SK-N-SH (cell line): ENCODE measurements at regions of chr2 and their contacts with region 1.

Region 1: DNA sequence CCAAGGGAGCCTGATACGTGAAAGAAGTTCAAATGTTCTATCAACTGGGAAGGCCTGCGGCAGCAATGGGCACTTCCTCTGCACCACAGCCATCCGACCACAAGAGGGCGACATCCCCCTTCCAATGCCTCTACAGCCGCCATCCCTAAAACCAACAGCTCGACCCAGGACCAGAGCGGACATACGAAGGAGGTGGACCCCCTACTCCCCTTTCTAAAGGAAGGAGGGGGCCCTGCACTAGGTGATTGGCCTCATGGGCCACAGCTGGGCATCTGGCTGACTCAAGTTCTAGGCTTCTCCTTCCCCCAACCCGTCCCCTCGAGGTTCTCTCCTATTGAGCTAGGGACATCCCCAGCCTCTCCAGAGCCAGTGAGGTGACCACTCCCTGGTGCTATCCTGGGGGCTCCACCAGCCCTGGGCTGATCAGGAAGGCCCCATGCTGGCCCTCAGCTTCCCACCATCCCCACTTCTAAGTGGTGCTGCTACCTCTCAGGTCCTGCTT is 217.2 kb downstream of the TNS1 start:
- DNase-seq: peak; percentile 90
- H3K4me3 ChIP-seq: no peak overlapping the region; a peak in 1 of 4 replicates
- H3K27ac ChIP-seq: no peak overlapping the region
- H3K4me1 ChIP-seq: peaks cover 0 to 9% of the 10 kb centered on the region in 2 experiments; a peak in 2 of 4 replicates
- H3K27me3 ChIP-seq: no peaks in the 10 kb centered on the region
- CTCF ChIP-seq: peak; percentile 94
- EP300 ChIP-seq: no peak
- RAD21 ChIP-seq: peak; percentile 98

Region 2: GRCh38 chr2:217593732-217594131 is 191.9 kb before region 1 on chr2:
- CTCF ChIA-PET with region 1: no interaction called
- POLR2A ChIA-PET with region 1: no interaction called
- DNase-seq: no peak
- H3K4me3 ChIP-seq: no peak overlapping the region
- H3K27ac ChIP-seq: no peak overlapping the region; a peak in 1 of 4 replicates
- H3K4me1 ChIP-seq: peaks cover 0 to 5% of the 10 kb centered on the region in 2 experiments; a peak in 1 of 4 replicates
- H3K27me3 ChIP-seq: no peaks in the 10 kb centered on the region; the same call in 1 of the 2 replicates
- CTCF ChIP-seq: no peak
- EP300 ChIP-seq: no peak
- RAD21 ChIP-seq: no peak

Region 3: DNA sequence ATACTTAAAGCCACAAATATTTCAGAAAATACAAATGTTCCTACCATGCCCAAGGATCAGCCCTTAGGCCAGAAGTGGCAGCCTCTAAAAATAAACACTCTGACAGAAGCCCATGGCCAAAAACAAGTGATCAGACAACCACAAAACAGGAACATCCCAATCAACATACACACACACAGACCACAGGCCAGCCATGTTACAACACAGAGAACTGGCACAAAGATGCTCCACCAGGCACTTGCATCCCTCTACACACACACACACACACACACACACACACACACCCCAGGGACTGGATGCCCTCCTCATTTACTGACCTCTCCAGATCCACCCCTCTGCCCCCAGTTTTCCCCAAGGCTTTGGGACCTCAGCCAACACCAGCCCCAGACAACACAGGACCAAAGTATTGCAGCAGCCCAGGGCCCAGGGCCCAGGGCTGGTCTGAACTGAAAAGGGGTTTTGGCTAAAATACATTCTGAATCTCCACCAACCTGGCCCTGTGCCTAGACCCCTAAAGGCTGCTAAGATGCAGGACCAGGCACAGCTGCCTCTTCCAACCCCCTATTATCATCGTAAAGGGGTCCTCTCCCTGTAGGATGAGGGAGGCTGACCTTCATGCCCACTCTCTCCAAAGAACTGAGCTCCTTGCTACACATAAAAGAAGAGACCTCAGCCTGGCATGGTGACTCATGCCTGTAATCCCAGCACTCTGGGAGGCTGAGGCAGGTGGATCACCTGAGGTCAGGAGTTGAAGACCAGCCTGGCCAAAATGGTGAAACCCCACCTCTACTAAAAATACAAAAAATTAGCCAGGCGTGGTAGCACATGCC is 65.8 kb after region 1 on chr2:
- CTCF ChIA-PET with region 1: interaction called, 12 read pairs
- POLR2A ChIA-PET with region 1: no interaction called
- DNase-seq: peak; percentile 69
- H3K4me3 ChIP-seq: no peak overlapping the region
- H3K27ac ChIP-seq: peak overlapping the region in 1 of 2 experiments; percentile 63; a peak in 2 of 4 replicates
- H3K4me1 ChIP-seq: peaks cover 31 to 46% of the 10 kb centered on the region in 2 experiments; a peak in 3 of 4 replicates
- H3K27me3 ChIP-seq: no peaks in the 10 kb centered on the region
- CTCF ChIP-seq: no peak
- EP300 ChIP-seq: no peak; a peak in 1 of 4 replicates
- RAD21 ChIP-seq: no peak

Region 4: DNA sequence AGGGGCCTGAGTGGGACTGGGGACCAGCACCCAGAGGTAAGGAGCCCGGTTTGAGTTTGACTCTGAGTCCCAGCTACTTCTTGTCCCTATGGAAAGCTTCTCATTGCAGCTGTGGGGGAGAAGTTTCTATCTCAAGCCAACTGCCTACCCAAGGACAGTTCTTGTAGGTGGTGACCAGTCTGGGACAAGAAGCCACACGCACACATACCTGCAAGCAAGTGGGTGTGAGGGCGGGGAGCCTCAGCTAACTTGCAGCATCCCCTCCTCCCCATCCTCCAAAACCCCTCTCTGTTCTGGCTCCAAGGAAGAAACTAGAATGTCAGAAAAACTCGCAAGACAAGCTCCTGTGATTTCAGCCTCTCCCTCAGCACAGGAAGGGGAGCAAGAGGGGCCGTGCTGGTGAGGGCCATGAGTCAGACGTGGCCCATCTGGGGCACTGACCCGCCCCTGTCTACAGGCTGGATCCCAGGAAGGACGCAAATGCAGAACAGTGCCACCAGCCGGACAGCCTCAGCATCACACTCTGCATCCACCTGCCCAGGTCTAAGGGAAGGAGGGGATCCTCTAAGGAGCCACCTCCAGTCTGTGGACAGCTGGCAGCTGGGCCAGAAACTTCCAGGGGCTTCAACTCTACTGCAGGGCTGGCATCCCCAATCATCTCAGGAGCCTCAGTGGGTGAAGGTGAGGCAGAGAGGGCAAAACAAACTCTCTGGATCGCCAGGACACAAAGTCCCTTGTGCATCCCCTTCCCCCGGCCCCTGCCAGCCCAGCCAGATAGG is 113.8 kb after region 1 on chr2:
- CTCF ChIA-PET with region 1: interaction called, 360 read pairs
- POLR2A ChIA-PET with region 1: no interaction called
- DNase-seq: peak; percentile 76
- H3K4me3 ChIP-seq: no peak overlapping the region; a peak in 1 of 4 replicates
- H3K27ac ChIP-seq: peak overlapping the region in 1 of 2 experiments; percentile 52; a peak in 3 of 4 replicates
- H3K4me1 ChIP-seq: peaks cover 12 to 45% of the 10 kb centered on the region in 2 experiments; a peak in 2 of 4 replicates
- H3K27me3 ChIP-seq: no peaks in the 10 kb centered on the region
- CTCF ChIP-seq: peak; percentile 87
- EP300 ChIP-seq: no peak
- RAD21 ChIP-seq: peak; percentile 47

Region 5: DNA sequence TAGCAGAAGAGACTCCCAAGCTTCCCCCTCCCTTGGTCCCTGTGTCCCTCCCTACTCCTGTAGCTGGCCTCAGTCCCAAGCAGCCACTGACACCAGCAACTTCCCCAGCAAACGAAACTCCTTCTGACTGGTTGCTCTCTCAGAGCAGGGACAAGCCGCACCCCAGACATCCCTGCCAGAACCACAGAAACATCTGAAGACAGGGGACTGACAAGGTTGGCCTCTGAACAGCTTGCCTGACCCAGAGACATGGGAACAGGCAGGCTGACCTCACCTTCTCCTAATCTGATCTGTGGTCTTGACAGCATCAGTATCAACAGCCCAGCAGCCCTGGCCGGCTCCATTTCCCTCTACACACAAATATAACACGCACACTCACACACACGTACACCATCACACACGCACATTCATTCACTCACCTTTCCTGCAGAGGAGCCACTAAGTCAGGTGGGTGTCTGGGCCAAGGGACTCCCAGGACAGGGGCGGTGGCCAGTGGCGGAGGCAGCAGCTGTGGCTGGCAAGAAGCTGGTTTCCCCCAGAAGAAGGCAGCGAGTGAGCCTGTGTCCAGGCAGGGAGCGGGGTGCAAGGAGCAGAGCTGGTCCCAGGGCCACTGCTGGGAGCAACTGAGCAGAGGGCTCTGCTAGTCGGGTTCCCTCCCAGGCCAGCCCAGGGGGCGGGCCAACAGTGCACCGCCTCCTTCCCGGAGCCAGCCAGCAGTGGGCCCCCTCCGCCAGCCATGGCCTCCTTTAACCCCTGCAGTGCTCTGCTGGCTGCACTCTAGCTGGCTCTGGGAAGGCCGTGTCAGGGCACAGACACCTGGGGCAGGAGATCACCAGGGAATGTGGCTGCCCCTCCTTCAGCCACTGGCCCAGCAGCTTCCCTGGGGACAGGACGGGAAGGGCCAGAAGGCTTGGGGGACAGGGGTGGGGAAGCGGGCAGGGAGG is 158.1 kb after region 1 on chr2:
- CTCF ChIA-PET with region 1: interaction called, 47 read pairs
- POLR2A ChIA-PET with region 1: no interaction called
- DNase-seq: peak; percentile 96
- H3K4me3 ChIP-seq: peak overlapping the region; percentile 38 to 70
- H3K27ac ChIP-seq: peak overlapping the region; percentile 60 to 86; a peak in 3 of 4 replicates
- H3K4me1 ChIP-seq: peaks cover 7 to 94% of the 10 kb centered on the region in 2 experiments
- H3K27me3 ChIP-seq: no peaks in the 10 kb centered on the region
- CTCF ChIP-seq: peak; percentile 29
- EP300 ChIP-seq: no peak
- RAD21 ChIP-seq: peak; percentile 53

Region 6: GRCh38 chr2:217988014-217988839 is 202.6 kb after region 1 on chr2:
- CTCF ChIA-PET with region 1: interaction called, 666 read pairs
- POLR2A ChIA-PET with region 1: interaction called, 6 read pairs
- DNase-seq: peak; percentile 83
- H3K4me3 ChIP-seq: no peak overlapping the region; a peak in 1 of 4 replicates
- H3K27ac ChIP-seq: peak overlapping the region in 1 of 2 experiments; percentile 36; a peak in 2 of 4 replicates
- H3K4me1 ChIP-seq: peaks cover 8 to 14% of the 10 kb centered on the region in 2 experiments; a peak in 3 of 4 replicates
- H3K27me3 ChIP-seq: no peaks in the 10 kb centered on the region
- CTCF ChIP-seq: peak; percentile 86
- EP300 ChIP-seq: 0 out of 4 replicates have a peak, but pooled peaks of 1 of the 2 experiments have one; percentile 6
- RAD21 ChIP-seq: peak; percentile 96

Region 7: DNA sequence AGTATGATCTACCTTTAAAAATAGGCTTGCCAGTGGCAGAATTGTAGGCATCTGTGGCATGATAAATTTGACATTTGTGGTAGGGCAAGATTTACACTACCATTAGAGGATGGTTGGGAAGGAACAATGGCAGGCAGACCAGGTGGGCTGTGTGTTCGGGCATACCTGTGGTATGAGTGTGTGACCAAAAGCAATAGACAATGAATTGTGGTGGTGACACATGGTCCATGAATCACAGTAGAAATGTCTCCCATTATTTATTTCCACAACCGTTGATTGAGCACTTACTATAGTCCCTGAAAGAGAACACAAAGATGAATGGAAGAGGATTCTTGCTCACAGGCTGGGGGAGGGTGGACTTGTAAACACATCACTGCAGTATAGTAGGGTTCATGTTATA is 253.6 kb after region 1 on chr2:
- CTCF ChIA-PET with region 1: interaction called, 161 read pairs
- POLR2A ChIA-PET with region 1: interaction called, 4 read pairs
- DNase-seq: no peak
- H3K4me3 ChIP-seq: no peak overlapping the region
- H3K27ac ChIP-seq: no peak overlapping the region
- H3K4me1 ChIP-seq: peaks cover 0 to 5% of the 10 kb centered on the region in 2 experiments; a peak in 1 of 4 replicates
- H3K27me3 ChIP-seq: peaks cover 14% of the 10 kb centered on the region; the same call in 1 of the 2 replicates
- CTCF ChIP-seq: no peak
- EP300 ChIP-seq: no peak
- RAD21 ChIP-seq: no peak